ENCODE measurements at regions of chr7 and their contacts with region 1.

Region 1: GRCh38 chr7:12490117-12490688 is 80.3 kb upstream of the SCIN start:
- DNase-seq: no peak
- ATAC-seq: no peak
- H3K4me3 ChIP-seq: no peak overlapping the region
- H3K27ac ChIP-seq: no peak overlapping the region
- H3K4me1 ChIP-seq: no peaks in the 10 kb centered on the region
- H3K27me3 ChIP-seq: no peaks in the 10 kb centered on the region

Region 2: DNA sequence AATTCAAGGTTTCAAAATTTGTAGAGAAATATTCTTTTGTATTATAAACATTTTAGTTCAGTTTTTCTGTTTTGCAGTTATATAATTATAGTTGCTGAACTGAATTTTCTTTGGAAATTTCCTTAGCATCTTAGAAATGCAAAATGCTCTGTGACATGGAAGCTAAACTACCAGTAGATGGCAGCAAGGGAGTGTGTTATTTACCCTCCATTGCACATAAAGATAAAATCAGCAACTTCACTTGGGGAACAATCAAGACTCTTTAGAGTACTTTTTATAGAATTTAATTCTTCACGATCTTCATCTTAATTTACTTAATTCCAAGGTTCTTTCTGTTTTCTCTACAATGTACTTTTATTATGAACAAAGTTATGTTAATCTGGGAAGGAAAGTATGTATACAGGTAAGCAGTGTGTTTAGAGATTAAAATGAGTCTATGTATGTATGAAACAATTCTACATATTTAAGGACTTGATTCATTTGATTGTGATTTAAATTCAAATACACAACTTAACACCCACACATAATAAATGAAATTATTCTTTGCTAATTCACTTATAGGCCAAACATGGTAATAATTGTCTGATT is 1062.4 kb before region 1 on chr7:
- intact Hi-C with region 1: loop called in 1 of 4 experiments (anchors 5 kb)
- DNase-seq: no peak
- ATAC-seq: peak; percentile 48 to 61
- H3K4me3 ChIP-seq: no peak overlapping the region
- H3K27ac ChIP-seq: no peak overlapping the region
- H3K4me1 ChIP-seq: no peaks in the 10 kb centered on the region
- H3K27me3 ChIP-seq: no peaks in the 10 kb centered on the region

Region 3: DNA sequence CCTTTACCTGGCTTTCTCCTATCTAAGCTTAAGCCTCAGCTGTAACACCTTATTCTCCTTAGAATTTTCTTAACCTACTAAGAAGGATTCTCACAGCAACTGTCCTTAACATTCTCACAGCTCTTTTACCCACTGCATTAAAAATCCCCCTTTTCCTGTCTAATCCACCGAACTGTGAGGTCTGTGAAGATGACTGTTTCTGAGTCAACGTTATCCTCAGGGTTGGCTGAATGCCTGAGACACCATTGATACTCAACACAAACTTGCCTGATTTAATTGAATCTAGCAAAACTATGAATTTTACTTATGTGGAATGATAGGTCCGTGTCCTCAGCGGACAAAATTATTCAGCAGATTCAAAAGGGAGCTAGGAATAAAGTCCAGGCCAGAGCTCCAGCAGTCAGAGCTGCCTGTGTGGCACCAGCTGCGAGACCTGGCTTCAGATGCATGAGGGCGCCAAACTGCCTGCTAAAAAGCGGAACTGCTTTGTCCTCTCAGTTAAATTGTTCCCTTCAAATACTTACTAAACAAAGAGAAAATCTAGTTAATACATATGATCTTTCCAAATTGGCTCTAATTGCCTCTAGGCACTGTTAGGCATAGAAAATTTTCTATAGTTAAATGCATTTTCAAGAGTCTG is 53.2 kb before region 1 on chr7:
- intact Hi-C with region 1: loop called in 2 of 4 experiments (anchors 10 kb)
- DNase-seq: peak in 2 of 3 donors; percentile 42 to 59
- ATAC-seq: no peak
- H3K4me3 ChIP-seq: no peak overlapping the region
- H3K27ac ChIP-seq: no peak overlapping the region
- H3K4me1 ChIP-seq: no peaks in the 10 kb centered on the region
- H3K27me3 ChIP-seq: no peaks in the 10 kb centered on the region

Region 4: GRCh38 chr7:12458520-12459131 is 31.6 kb before region 1 on chr7:
- intact Hi-C with region 1: loop called in 3 of 4 experiments (anchors 5 kb)
- DNase-seq: no peak
- ATAC-seq: peak; percentile 61 to 76
- H3K4me3 ChIP-seq: no peak overlapping the region
- H3K27ac ChIP-seq: no peak overlapping the region
- H3K4me1 ChIP-seq: no peaks in the 10 kb centered on the region
- H3K27me3 ChIP-seq: no peaks in the 10 kb centered on the region

Measured in right cardiac atrium (tissue), 5 donors.